T-cell (primary cell): ENCODE measurements at regions of chr2 and their contacts with region 1.

Region 1: DNA sequence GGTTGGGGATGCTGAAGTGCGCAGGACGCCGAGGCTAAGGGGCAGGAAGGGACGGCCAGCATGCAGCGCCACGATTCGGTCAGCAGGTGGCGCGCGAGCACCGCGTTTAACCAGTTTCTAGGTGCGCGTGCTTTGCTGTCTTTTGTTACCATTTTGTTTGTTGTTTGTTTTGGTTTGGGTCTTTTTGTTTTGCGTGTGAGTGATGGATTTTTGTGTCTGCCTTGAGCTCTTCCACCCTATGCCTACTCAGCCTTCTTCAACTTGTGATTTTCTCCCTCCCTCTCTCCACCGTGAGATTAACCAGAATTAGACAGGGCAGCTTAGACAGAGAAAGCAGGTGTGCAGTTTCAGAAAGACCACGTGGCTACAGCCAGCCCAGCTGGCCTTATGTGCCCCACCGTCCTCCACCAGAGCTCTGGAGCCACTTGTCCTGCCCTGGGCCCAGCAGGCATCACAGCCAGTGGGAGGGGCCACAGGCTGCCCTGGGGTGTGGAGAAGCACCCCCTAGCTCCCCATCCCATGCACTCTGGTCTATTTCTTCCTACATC is 180.2 kb downstream of the RNF144A start:
- DNase-seq: peak; percentile 27 to 85 (median 66)
- ATAC-seq: peak; percentile 88 to 90 (median 89)
- H3K4me3 ChIP-seq: peak overlapping the region in 1 of 2 donors; percentile 26
- H3K4me3 Mint-ChIP-seq: peak overlapping the region; percentile 40 to 73 (median 63)
- H3K27ac ChIP-seq: no peak overlapping the region
- H3K27ac Mint-ChIP-seq: peak overlapping the region in 1 of 2 donors; percentile 12
- H3K4me1 ChIP-seq: peaks cover 0 to 8% of the 10 kb centered on the region in 2 experiments
- H3K4me1 Mint-ChIP-seq: peaks cover 8 to 9% (median 8%) of the 10 kb centered on the region in 3 donors
- H3K27me3 ChIP-seq: no peaks in the 10 kb centered on the region
- H3K27me3 Mint-ChIP-seq: no peaks in the 10 kb centered on the region

Region 2: DNA sequence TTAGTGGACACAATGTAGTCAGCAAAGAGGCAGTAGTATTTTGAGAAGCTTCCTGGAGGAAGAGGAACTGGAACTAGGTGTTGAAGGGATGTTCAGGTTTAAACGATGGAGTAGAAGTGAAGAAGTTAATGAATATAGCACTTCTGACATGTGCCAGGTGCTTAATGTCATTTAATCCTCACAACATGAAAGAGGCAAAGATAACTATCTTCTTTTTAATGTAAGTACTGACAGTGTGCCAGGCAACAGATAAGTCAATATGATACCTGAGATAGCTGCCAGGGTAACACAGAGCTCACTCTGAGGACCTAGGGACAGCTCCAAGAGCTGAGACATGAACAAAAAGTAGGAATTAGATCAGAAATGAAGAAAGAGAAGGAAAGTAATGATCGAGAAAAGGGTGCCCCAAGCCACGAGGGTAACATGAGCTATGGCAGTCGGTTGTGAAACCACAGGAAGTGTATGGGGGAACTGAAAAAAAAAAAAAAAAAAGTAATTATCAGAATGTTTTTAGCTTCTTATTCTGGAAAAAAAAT is 39.5 kb before region 1 on chr2:
- CTCF ChIA-PET with region 1: interaction called in 1 of 2 experiments, 12 read pairs
- POLR2A ChIA-PET with region 1: interaction called in 1 of 2 experiments, 4 read pairs
- DNase-seq: peak in 16 of 35 experiments; percentile 2 to 47 (median 19)
- ATAC-seq: peak; percentile 55 to 66 (median 56)
- H3K4me3 ChIP-seq: peak overlapping the region in 1 of 2 donors; percentile 11
- H3K4me3 Mint-ChIP-seq: peak overlapping the region; percentile 44 to 77 (median 73)
- H3K27ac ChIP-seq: peak overlapping the region; percentile 77
- H3K27ac Mint-ChIP-seq: no peak overlapping the region
- H3K4me1 ChIP-seq: peaks cover 32 to 39% of the 10 kb centered on the region in 2 experiments
- H3K4me1 Mint-ChIP-seq: peaks cover 8 to 28% (median 25%) of the 10 kb centered on the region in 3 donors
- H3K27me3 ChIP-seq: no peaks in the 10 kb centered on the region
- H3K27me3 Mint-ChIP-seq: no peaks in the 10 kb centered on the region

Region 3: GRCh38 chr2:7203055-7203467 is 105.6 kb after region 1 on chr2:
- CTCF ChIA-PET with region 1: interaction called in 1 of 2 experiments, 10 read pairs
- POLR2A ChIA-PET with region 1: no interaction called
- DNase-seq: peak in 33 of 35 experiments; percentile 4 to 77 (median 48)
- ATAC-seq: peak in 3 of 4 experiments; percentile 41 to 60 (median 55)
- H3K4me3 ChIP-seq: no peak overlapping the region
- H3K4me3 Mint-ChIP-seq: no peak overlapping the region
- H3K27ac ChIP-seq: no peak overlapping the region
- H3K27ac Mint-ChIP-seq: no peak overlapping the region
- H3K4me1 ChIP-seq: no peaks in the 10 kb centered on the region
- H3K4me1 Mint-ChIP-seq: no peaks in the 10 kb centered on the region
- H3K27me3 ChIP-seq: peaks cover 0 to 4% of the 10 kb centered on the region in 2 experiments
- H3K27me3 Mint-ChIP-seq: no peaks in the 10 kb centered on the region